Prostate gland (tissue), 2 donors: ENCODE measurements at regions of chr2 and their contacts with region 1.

Region 1: GRCh38 chr2:27954771-27955383 is 64.3 kb downstream of the BABAM2 start:
- DNase-seq: peak; percentile 31
- H3K4me3 ChIP-seq: no peak overlapping the region
- H3K27ac ChIP-seq: peak overlapping the region in 1 of 2 donors; percentile 20
- H3K4me1 ChIP-seq: peaks cover 2% of the 10 kb centered on the region
- H3K27me3 ChIP-seq: no peaks in the 10 kb centered on the region
- CTCF ChIP-seq: peak in 2 of 4 experiments; percentile 22 to 34
- POLR2A ChIP-seq: no peak

Region 2: GRCh38 chr2:27901234-27901633 is 53.6 kb before region 1 on chr2:
- intact Hi-C with region 1: no loop called
- DNase-seq: no peak
- H3K4me3 ChIP-seq: no peak overlapping the region
- H3K27ac ChIP-seq: no peak overlapping the region
- H3K4me1 ChIP-seq: no peaks in the 10 kb centered on the region
- H3K27me3 ChIP-seq: no peaks in the 10 kb centered on the region
- CTCF ChIP-seq: no peak
- POLR2A ChIP-seq: no peak

Region 3: DNA sequence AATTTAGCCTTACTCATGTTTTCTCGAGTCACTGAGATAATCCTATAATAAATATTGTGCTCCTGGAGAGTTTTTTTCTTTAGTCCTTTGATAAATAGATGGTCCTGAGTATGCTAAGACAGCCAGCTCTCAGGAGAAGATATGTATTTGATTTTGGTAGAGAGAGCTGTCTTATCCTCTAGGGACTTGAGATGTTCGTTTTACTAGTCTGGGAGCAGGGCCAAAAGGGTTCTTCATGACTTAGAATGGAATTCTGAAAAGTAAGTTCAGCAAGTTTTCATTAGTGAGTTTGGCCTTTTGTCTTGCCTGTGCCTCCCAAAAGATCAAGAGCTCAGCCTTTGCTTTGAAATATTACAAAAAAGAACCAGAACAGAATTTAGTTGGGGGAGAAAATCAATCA is 182.3 kb after region 1 on chr2:
- intact Hi-C with region 1: loop called (anchors 10 kb)
- DNase-seq: peak; percentile 80
- H3K4me3 ChIP-seq: no peak overlapping the region
- H3K27ac ChIP-seq: peak overlapping the region; percentile 15 to 62
- H3K4me1 ChIP-seq: peaks cover 4% of the 10 kb centered on the region
- H3K27me3 ChIP-seq: no peaks in the 10 kb centered on the region
- CTCF ChIP-seq: no peak
- POLR2A ChIP-seq: no peak

Region 4: GRCh38 chr2:28164280-28164801 is 209.5 kb after region 1 on chr2:
- intact Hi-C with region 1: loop called (anchors 10 kb)
- DNase-seq: peak; percentile 63
- H3K4me3 ChIP-seq: no peak overlapping the region
- H3K27ac ChIP-seq: peak overlapping the region; percentile 32 to 71
- H3K4me1 ChIP-seq: peaks cover 9% of the 10 kb centered on the region
- H3K27me3 ChIP-seq: no peaks in the 10 kb centered on the region
- CTCF ChIP-seq: no peak
- POLR2A ChIP-seq: no peak

Region 5: GRCh38 chr2:28403370-28403956 is 448.6 kb after region 1 on chr2:
- intact Hi-C with region 1: loop called (anchors 5 kb)
- DNase-seq: no peak
- H3K4me3 ChIP-seq: no peak overlapping the region
- H3K27ac ChIP-seq: no peak overlapping the region
- H3K4me1 ChIP-seq: peaks cover 5% of the 10 kb centered on the region
- H3K27me3 ChIP-seq: no peaks in the 10 kb centered on the region
- CTCF ChIP-seq: no peak
- POLR2A ChIP-seq: no peak